ENCODE measurements at regions of chr1 and their contacts with region 1.

Region 1: GRCh38 chr1:181397845-181398244 is 85.5 kb upstream of the CACNA1E start:
- DNase-seq: peak in 7 of 9 donors; percentile 24 to 57 (median 45)
- ATAC-seq: peak; percentile 47
- H3K4me3 ChIP-seq: peak overlapping the region; percentile 22
- H3K4me3 Mint-ChIP-seq: peak overlapping the region in 8 of 10 donors; percentile 57 to 82 (median 74)
- H3K27ac ChIP-seq: peak overlapping the region; percentile 62
- H3K27ac Mint-ChIP-seq: peak overlapping the region in 2 of 9 donors; percentile 83 to 94
- H3K4me1 ChIP-seq: peaks cover 41 to 77% of the 10 kb centered on the region in 2 donors
- H3K4me1 Mint-ChIP-seq: peaks cover 26 to 45% (median 41%) of the 10 kb centered on the region in 7 donors
- H3K27me3 ChIP-seq: no peaks in the 10 kb centered on the region
- H3K27me3 Mint-ChIP-seq: no peaks in the 10 kb centered on the region

Region 2: DNA sequence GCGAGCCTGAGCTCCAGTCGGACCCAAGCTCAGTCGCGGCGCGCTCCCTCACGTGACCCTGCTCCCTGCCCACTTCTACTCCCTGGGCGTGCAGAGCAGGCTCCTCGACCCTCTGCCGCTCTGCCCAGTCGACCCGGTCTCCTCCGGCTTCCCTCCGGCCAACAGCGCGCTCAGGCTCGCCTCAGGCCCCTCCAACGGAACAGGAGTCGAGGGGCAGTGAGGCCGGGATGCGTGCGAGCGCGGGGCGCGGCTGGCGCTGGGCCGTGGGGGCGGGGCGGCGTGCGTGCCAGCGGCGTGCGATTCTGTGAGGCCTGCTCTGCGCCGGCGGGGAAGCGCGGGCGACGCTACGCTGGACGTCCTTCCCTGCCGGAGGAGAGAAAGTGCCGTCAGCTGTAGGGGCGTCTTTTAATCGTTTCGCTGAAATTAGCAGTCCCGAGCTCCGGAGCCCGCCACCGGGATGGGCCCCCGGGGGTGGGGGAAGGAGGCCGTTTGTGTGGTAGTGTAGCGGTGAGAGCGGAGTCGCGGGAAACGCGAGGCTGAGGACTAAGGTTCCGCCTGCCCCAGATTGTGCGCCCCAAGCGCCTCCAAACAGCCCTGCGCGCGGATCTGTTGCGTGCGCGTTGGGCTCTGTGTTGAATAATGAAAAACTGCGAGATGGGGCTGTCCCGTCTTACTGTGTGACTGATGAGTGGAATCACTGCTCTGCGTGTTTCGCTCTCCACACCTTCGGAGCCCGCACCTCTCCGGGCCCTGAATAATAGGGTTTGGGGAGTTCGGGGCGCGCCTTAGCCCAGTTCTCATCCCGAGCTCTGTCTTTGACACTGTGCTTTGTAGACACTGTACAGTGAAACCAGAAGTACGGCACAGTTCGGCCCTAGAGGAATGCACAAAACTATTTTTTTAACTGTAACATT is 895.2 kb before region 1 on chr1 and contains the start of gene ACBD6:
- CTCF ChIA-PET with region 1: no interaction called
- POLR2A ChIA-PET with region 1: interaction called, 3 read pairs
- intact Hi-C with region 1: loop called in 1 of 2 experiments (anchors 2 kb)
- DNase-seq: peak; percentile 80 to 92 (median 89)
- ATAC-seq: peak; percentile 95
- H3K4me3 ChIP-seq: peak within 1 kb of the TSS; percentile 85
- H3K4me3 Mint-ChIP-seq: peak within 1 kb of the TSS; percentile 89 to 100 (median 97)
- H3K27ac ChIP-seq: peak within 1 kb of the TSS; percentile 79
- H3K27ac Mint-ChIP-seq: peak within 1 kb of the TSS; percentile 91 to 99 (median 98)
- H3K4me1 ChIP-seq: peaks cover 10 to 18% of the 10 kb centered on the region in 2 donors
- H3K4me1 Mint-ChIP-seq: peaks cover 17 to 55% (median 38%) of the 10 kb centered on the region in 7 donors
- H3K27me3 ChIP-seq: no peaks in the 10 kb centered on the region
- H3K27me3 Mint-ChIP-seq: peaks cover 0 to 5% (median 0%) of the 10 kb centered on the region in 5 donors
- total RNA-seq, gene ACBD6: 44.2 to 75.7 (median 47.3) TPM

Region 3: DNA sequence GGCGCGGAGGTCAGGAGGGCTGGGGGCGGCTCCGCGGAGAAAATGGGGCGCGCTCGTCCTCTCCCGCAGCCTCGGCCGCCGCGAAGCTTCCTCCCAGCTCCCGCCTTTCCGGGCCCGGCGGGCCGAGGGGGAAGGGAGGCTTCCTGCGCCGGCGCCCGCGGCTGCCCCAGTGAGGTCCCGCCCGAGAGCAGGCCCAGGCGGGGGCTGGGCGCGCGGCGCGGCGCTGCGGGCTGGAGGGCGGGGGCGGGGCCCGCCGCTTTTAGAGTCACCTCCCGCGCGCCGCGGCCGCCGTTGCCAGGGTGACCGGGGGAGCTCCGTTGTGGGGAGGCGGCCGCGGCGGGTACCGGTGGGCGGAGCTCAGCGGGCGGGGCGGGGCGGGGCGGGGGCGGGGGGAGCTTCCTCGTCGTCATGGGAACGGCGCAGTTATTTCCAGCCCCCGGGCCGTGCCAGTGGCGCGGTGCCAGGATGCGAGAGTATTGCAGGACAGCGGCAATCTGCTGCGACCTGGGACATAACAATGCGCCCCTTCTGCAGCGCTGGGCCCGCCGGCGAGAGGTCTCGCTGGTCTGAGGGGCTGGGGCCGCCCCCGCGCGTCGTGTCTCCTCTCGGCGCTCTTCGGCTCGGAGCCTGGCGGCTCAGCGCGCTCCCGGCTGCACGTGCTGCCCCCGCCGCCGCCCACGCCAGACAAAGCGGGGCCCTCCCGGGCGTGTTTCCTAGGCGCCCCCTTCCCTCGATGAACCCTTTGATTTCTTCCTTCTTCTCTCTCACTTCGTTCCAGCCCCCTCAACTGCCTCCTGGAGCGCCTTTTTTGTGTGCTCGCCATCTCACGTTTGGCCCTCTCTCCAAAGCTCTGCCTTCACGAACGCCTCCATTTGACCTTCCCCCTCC is 292.5 kb before region 1 on chr1:
- CTCF ChIA-PET with region 1: no interaction called
- POLR2A ChIA-PET with region 1: interaction called, 3 read pairs
- intact Hi-C with region 1: loop called in 1 of 2 experiments (anchors 1 kb)
- DNase-seq: peak; percentile 81 to 94 (median 90)
- ATAC-seq: peak; percentile 94
- H3K4me3 ChIP-seq: peak overlapping the region; percentile 61
- H3K4me3 Mint-ChIP-seq: peak overlapping the region; percentile 84 to 96 (median 91)
- H3K27ac ChIP-seq: peak overlapping the region; percentile 85
- H3K27ac Mint-ChIP-seq: peak overlapping the region; percentile 69 to 97 (median 89)
- H3K4me1 ChIP-seq: peaks cover 16 to 20% of the 10 kb centered on the region in 2 donors
- H3K4me1 Mint-ChIP-seq: peaks cover 22 to 76% (median 61%) of the 10 kb centered on the region in 7 donors
- H3K27me3 ChIP-seq: no peaks in the 10 kb centered on the region
- H3K27me3 Mint-ChIP-seq: peaks cover 0 to 43% (median 0%) of the 10 kb centered on the region in 5 donors

Region 4: GRCh38 chr1:181318022-181318857 is 79.6 kb before region 1 on chr1:
- CTCF ChIA-PET with region 1: no interaction called
- POLR2A ChIA-PET with region 1: no interaction called
- intact Hi-C with region 1: loop called in 1 of 2 experiments (anchors 2 kb)
- DNase-seq: peak in 5 of 9 donors; percentile 14 to 28 (median 16)
- ATAC-seq: peak; percentile 49
- H3K4me3 ChIP-seq: peak overlapping the region; percentile 33
- H3K4me3 Mint-ChIP-seq: peak overlapping the region; percentile 56 to 90 (median 84)
- H3K27ac ChIP-seq: no peak overlapping the region
- H3K27ac Mint-ChIP-seq: peak overlapping the region in 2 of 9 donors; percentile 17 to 55
- H3K4me1 ChIP-seq: peaks cover 0 to 10% of the 10 kb centered on the region in 2 donors
- H3K4me1 Mint-ChIP-seq: peaks cover 16 to 40% (median 26%) of the 10 kb centered on the region in 7 donors
- H3K27me3 ChIP-seq: peaks cover 0 to 35% of the 10 kb centered on the region in 2 donors
- H3K27me3 Mint-ChIP-seq: peaks cover 46 to 77% (median 59%) of the 10 kb centered on the region in 5 donors

Region 5: GRCh38 chr1:181469829-181470228 is 72.0 kb after region 1 on chr1:
- CTCF ChIA-PET with region 1: no interaction called
- POLR2A ChIA-PET with region 1: no interaction called
- intact Hi-C with region 1: no loop called
- DNase-seq: no peak
- ATAC-seq: no peak
- H3K4me3 ChIP-seq: no peak overlapping the region
- H3K4me3 Mint-ChIP-seq: no peak overlapping the region
- H3K27ac ChIP-seq: no peak overlapping the region
- H3K27ac Mint-ChIP-seq: no peak overlapping the region
- H3K4me1 ChIP-seq: no peaks in the 10 kb centered on the region
- H3K4me1 Mint-ChIP-seq: no peaks in the 10 kb centered on the region
- H3K27me3 ChIP-seq: no peaks in the 10 kb centered on the region
- H3K27me3 Mint-ChIP-seq: peaks cover 22 to 51% (median 42%) of the 10 kb centered on the region in 5 donors

Region 6: GRCh38 chr1:182029379-182030331 is 631.8 kb after region 1 on chr1:
- CTCF ChIA-PET with region 1: no interaction called
- POLR2A ChIA-PET with region 1: no interaction called
- intact Hi-C with region 1: loop called in 1 of 2 experiments (anchors 1 kb)
- DNase-seq: peak; percentile 95 to 98 (median 98)
- ATAC-seq: peak; percentile 97
- H3K4me3 ChIP-seq: peak overlapping the region; percentile 72
- H3K4me3 Mint-ChIP-seq: peak overlapping the region; percentile 90 to 100 (median 96)
- H3K27ac ChIP-seq: peak overlapping the region; percentile 87
- H3K27ac Mint-ChIP-seq: peak overlapping the region; percentile 94 to 100 (median 99)
- H3K4me1 ChIP-seq: peaks cover 9 to 14% of the 10 kb centered on the region in 2 donors
- H3K4me1 Mint-ChIP-seq: peaks cover 12 to 21% (median 18%) of the 10 kb centered on the region in 7 donors
- H3K27me3 ChIP-seq: no peaks in the 10 kb centered on the region
- H3K27me3 Mint-ChIP-seq: peaks cover 0 to 6% (median 0%) of the 10 kb centered on the region in 5 donors

Region 7: GRCh38 chr1:182789138-182790076 is 1391.6 kb after region 1 on chr1 and contains the start of gene NPL:
- CTCF ChIA-PET with region 1: no interaction called
- POLR2A ChIA-PET with region 1: no interaction called
- intact Hi-C with region 1: loop called in 1 of 2 experiments (anchors 2 kb)
- DNase-seq: peak; percentile 78 to 88 (median 86)
- ATAC-seq: peak; percentile 97
- H3K4me3 ChIP-seq: peak within 1 kb of the TSS; percentile 94
- H3K4me3 Mint-ChIP-seq: peak within 1 kb of the TSS; percentile 88 to 96 (median 94)
- H3K27ac ChIP-seq: peak within 1 kb of the TSS; percentile 68
- H3K27ac Mint-ChIP-seq: peak within 1 kb of the TSS; percentile 45 to 94 (median 87)
- H3K4me1 ChIP-seq: peaks cover 8 to 13% of the 10 kb centered on the region in 2 donors
- H3K4me1 Mint-ChIP-seq: peaks cover 8 to 18% (median 15%) of the 10 kb centered on the region in 7 donors
- H3K27me3 ChIP-seq: no peaks in the 10 kb centered on the region
- H3K27me3 Mint-ChIP-seq: peaks cover 0 to 38% (median 0%) of the 10 kb centered on the region in 5 donors
- total RNA-seq, gene NPL: 3.0 to 20.8 (median 9.9) TPM